Left colon (tissue), 2 donors: ENCODE measurements at regions of chr18 and their contacts with region 1.

Region 1: DNA sequence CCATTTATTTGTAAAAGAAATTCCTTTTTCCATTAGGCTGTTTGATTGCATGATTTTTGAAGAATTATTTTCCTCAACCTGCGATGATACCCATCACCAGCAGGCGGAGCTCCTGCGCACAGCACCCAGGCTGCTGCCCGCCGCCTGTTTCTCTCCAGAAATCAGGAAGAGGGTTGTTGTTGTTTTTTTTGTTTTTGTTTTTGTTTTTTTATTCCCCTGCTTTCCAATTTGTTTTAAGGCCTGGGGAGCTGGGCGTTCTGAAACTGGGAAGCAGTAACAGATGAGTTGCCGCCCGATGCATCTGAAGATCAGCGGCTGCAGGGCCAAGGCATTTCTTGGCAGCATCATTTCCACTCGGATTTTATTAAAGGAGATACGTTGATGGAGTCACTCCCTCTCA is 132.1 kb downstream of the MBP start:
- DNase-seq: peak; percentile 22 to 59
- ATAC-seq: peak; percentile 58

Region 2: DNA sequence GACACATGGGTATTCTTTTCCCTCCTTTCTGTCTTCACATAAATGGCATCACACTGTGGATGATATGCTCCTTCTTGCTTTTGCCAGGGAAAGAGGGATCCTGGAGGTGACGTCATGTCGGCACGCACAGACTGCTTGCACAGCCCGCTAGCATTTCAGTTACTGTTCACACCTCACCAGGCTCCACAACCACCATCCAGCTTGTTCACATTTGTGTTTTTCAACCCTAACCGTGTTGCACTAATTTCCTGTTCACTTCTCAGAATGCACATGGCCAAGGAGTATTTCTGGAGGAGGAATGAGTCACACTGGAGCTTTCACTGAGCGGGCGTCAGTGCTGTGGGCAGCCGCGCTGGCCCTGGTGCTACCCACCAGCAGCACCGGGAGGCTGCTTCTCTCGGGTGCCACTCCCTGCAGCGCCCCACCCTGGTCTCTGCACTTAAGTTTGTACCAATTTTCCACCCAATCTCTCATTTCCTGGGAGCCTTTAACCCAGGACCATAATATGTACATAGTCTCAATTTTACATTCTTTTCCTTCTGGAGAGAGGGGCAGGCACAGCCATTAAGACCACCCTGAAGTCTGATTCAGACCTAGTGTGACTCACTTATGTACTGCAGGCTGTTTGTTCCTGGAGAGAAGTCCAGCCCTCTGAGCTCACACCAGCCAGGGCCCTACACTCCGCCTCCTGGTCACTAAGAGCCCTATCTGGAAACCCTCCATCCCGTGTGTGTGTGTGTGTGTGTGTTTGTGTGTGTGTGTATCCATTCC is 66.9 kb after region 1 on chr18:
- intact Hi-C with region 1: no loop called
- DNase-seq: peak; percentile 51 to 56
- ATAC-seq: peak; percentile 71

Region 3: DNA sequence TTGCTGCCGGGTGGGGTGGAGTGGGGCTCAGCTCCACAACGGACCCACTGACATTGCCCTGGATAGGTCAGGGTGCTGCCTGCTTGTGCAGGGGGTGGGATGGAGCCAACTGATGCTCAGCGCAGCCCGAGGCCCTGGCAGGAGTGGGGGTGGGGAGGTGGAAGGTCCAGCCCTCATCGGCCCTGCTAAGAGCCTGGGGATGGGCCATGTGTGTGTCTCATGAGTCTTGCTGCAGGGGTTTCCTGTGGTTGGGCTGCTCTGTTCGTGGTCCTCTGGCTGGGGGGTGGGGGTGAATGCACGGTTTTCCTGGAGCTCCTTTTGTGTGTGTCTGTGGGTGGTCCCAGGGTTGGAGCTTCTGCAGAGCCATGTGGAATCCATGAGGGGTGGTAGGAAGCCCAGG is 209.7 kb after region 1 on chr18:
- intact Hi-C with region 1: loop called (anchors 5 to 10 kb)
- DNase-seq: no peak
- ATAC-seq: no peak